Activated CD8-positive, alpha-beta T cell treated with anti-CD3 and anti-CD28 coated beads, Interleukin-2, amount 10 ng/mL, durations not matched to agents 7 days and 5 days (primary cell): ENCODE measurements at regions of chr7 and their contacts with region 1.

Region 1: GRCh38 chr7:87797798-87798403 is 78.3 kb downstream of the SLC25A40 start:
- DNase-seq: peak; percentile 35
- ATAC-seq: peak; percentile 47
- H3K4me3 Mint-ChIP-seq: no peak overlapping the region
- H3K27ac Mint-ChIP-seq: no peak overlapping the region
- H3K4me1 Mint-ChIP-seq: no peaks in the 10 kb centered on the region
- H3K27me3 Mint-ChIP-seq: peaks cover 17% of the 10 kb centered on the region

Region 2: GRCh38 chr7:87837597-87837996 is 39.7 kb after region 1 on chr7:
- CTCF ChIA-PET with region 1: no interaction called
- POLR2A ChIA-PET with region 1: no interaction called
- DNase-seq: no peak
- ATAC-seq: no peak
- H3K4me3 Mint-ChIP-seq: no peak overlapping the region
- H3K27ac Mint-ChIP-seq: no peak overlapping the region
- H3K4me1 Mint-ChIP-seq: no peaks in the 10 kb centered on the region
- H3K27me3 Mint-ChIP-seq: no peaks in the 10 kb centered on the region

Region 3: GRCh38 chr7:87886875-87887274 is 89.0 kb after region 1 on chr7:
- CTCF ChIA-PET with region 1: interaction called, 33 read pairs
- POLR2A ChIA-PET with region 1: no interaction called
- DNase-seq: no peak
- ATAC-seq: no peak
- H3K4me3 Mint-ChIP-seq: no peak overlapping the region
- H3K27ac Mint-ChIP-seq: no peak overlapping the region
- H3K4me1 Mint-ChIP-seq: peaks cover 13% of the 10 kb centered on the region
- H3K27me3 Mint-ChIP-seq: no peaks in the 10 kb centered on the region